Naive thymus-derived CD4-positive, alpha-beta T cell (primary cell): ENCODE measurements at regions of chr18 and their contacts with region 1.

Region 1: GRCh38 chr18:65214456-65214855 is 536.4 kb upstream of the CDH7 start:
- DNase-seq: no peak
- ATAC-seq: no peak
- H3K4me3 ChIP-seq: no peak overlapping the region
- H3K4me3 Mint-ChIP-seq: no peak overlapping the region
- H3K27ac ChIP-seq: no peak overlapping the region
- H3K27ac Mint-ChIP-seq: no peak overlapping the region
- H3K4me1 ChIP-seq: no peaks in the 10 kb centered on the region
- H3K4me1 Mint-ChIP-seq: no peaks in the 10 kb centered on the region
- H3K27me3 ChIP-seq: no peaks in the 10 kb centered on the region
- H3K27me3 Mint-ChIP-seq: no peaks in the 10 kb centered on the region

Region 2: GRCh38 chr18:66440433-66440832 is 1226.0 kb after region 1 on chr18:
- CTCF ChIA-PET with region 1: no interaction called
- POLR2A ChIA-PET with region 1: no interaction called
- intact Hi-C with region 1: loop called in 1 of 2 experiments (anchors 5 kb)
- DNase-seq: no peak
- ATAC-seq: peak; percentile 20
- H3K4me3 ChIP-seq: no peak overlapping the region
- H3K4me3 Mint-ChIP-seq: no peak overlapping the region
- H3K27ac ChIP-seq: no peak overlapping the region
- H3K27ac Mint-ChIP-seq: no peak overlapping the region
- H3K4me1 ChIP-seq: no peaks in the 10 kb centered on the region
- H3K4me1 Mint-ChIP-seq: no peaks in the 10 kb centered on the region
- H3K27me3 ChIP-seq: no peaks in the 10 kb centered on the region
- H3K27me3 Mint-ChIP-seq: no peaks in the 10 kb centered on the region